GM12878 (cell line): ENCODE measurements at regions of chr7 and their contacts with region 1.

Region 1: GRCh38 chr7:23055582-23056178 is 41.8 kb upstream of the HYCC1 start:
- DNase-seq: peak; percentile 60
- ATAC-seq: peak; percentile 99
- H3K4me3 ChIP-seq: no peak overlapping the region
- H3K27ac ChIP-seq: no peak overlapping the region
- H3K4me1 ChIP-seq: no peaks in the 10 kb centered on the region
- H3K27me3 ChIP-seq: no peaks in the 10 kb centered on the region
- CTCF ChIP-seq: peak; percentile 86 to 95 (median 94)
- EP300 ChIP-seq: no peak
- POLR2A ChIP-seq: no peak
- RAD21 ChIP-seq: peak; percentile 99

Region 2: GRCh38 chr7:22726345-22727185 is 329.1 kb before region 1 on chr7:
- CTCF ChIA-PET with region 1: interaction called, 85 read pairs
- POLR2A ChIA-PET with region 1: no interaction called
- RAD21 ChIA-PET with region 1: interaction called, 7 read pairs
- SMC1A ChIA-PET with region 1: interaction called, 46 read pairs
- in situ Hi-C with region 1: no loop called
- intact Hi-C with region 1: loop called (anchors 2 kb)
- DNase-seq: no peak
- ATAC-seq: peak; percentile 92
- H3K4me3 ChIP-seq: no peak overlapping the region
- H3K27ac ChIP-seq: no peak overlapping the region
- H3K4me1 ChIP-seq: peaks cover 5% of the 10 kb centered on the region; the same call in 1 of the 2 replicates
- H3K27me3 ChIP-seq: peaks cover 5 to 8% of the 10 kb centered on the region in 2 experiments
- CTCF ChIP-seq: peak; percentile 67 to 84 (median 77)
- EP300 ChIP-seq: no peak
- POLR2A ChIP-seq: no peak
- RAD21 ChIP-seq: peak; percentile 70

Region 3: DNA sequence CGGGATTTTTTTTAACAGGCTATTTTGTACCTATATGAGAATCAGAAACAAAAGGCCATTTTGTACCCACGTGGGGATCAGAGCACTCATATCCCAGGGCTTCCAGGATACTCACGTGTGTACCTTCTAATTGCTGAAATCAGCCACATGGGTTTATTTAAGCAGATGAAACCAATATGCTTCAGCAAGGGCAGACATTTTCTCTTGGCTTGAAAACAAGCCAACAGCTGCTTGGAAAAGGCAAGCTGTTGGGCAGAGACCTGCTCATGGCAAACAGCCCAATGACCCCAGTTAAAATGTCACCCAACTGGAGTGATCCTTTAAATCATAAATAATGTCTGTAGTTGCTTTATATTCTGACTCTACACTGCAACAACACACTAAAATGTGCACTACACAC is 206.5 kb before region 1 on chr7:
- CTCF ChIA-PET with region 1: interaction called, 40 read pairs
- POLR2A ChIA-PET with region 1: interaction called, 3 read pairs
- RAD21 ChIA-PET with region 1: interaction called, 46 read pairs
- SMC1A ChIA-PET with region 1: interaction called, 4 read pairs
- in situ Hi-C with region 1: no loop called
- intact Hi-C with region 1: loop called (anchors 2 kb)
- DNase-seq: no peak
- ATAC-seq: no peak
- H3K4me3 ChIP-seq: no peak overlapping the region
- H3K27ac ChIP-seq: no peak overlapping the region
- H3K4me1 ChIP-seq: 0 out of 2 replicates have a peak, but pooled peaks cover 4% of the 10 kb centered on the region
- H3K27me3 ChIP-seq: no peaks in the 10 kb centered on the region
- CTCF ChIP-seq: no peak
- EP300 ChIP-seq: no peak
- POLR2A ChIP-seq: no peak
- RAD21 ChIP-seq: no peak

Region 4: GRCh38 chr7:22872096-22872807 is 183.4 kb before region 1 on chr7:
- CTCF ChIA-PET with region 1: interaction called, 6 read pairs
- POLR2A ChIA-PET with region 1: interaction called, 3 read pairs
- RAD21 ChIA-PET with region 1: interaction called, 7 read pairs
- SMC1A ChIA-PET with region 1: interaction called, 13 read pairs
- in situ Hi-C with region 1: no loop called
- intact Hi-C with region 1: no loop called
- DNase-seq: peak; percentile 69
- ATAC-seq: peak; percentile 99
- H3K4me3 ChIP-seq: 0 out of 2 replicates have a peak overlapping the region, but pooled peaks have one; percentile 18
- H3K27ac ChIP-seq: peak overlapping the region; percentile 62
- H3K4me1 ChIP-seq: peaks cover 7% of the 10 kb centered on the region
- H3K27me3 ChIP-seq: no peaks in the 10 kb centered on the region
- CTCF ChIP-seq: no peak
- EP300 ChIP-seq: no peak
- POLR2A ChIP-seq: no peak; the same call in 1 of the 2 replicates
- RAD21 ChIP-seq: no peak

Region 5: GRCh38 chr7:22949944-22950343 is 105.7 kb before region 1 on chr7:
- CTCF ChIA-PET with region 1: interaction called, 30 read pairs
- POLR2A ChIA-PET with region 1: no interaction called
- RAD21 ChIA-PET with region 1: interaction called, 7 read pairs
- SMC1A ChIA-PET with region 1: interaction called, 18 read pairs
- in situ Hi-C with region 1: no loop called
- intact Hi-C with region 1: loop called (anchors 10 kb)
- DNase-seq: no peak
- ATAC-seq: no peak
- H3K4me3 ChIP-seq: no peak overlapping the region
- H3K27ac ChIP-seq: no peak overlapping the region
- H3K4me1 ChIP-seq: no peaks in the 10 kb centered on the region
- H3K27me3 ChIP-seq: no peaks in the 10 kb centered on the region
- CTCF ChIP-seq: no peak
- EP300 ChIP-seq: no peak
- POLR2A ChIP-seq: no peak
- RAD21 ChIP-seq: no peak

Region 6: DNA sequence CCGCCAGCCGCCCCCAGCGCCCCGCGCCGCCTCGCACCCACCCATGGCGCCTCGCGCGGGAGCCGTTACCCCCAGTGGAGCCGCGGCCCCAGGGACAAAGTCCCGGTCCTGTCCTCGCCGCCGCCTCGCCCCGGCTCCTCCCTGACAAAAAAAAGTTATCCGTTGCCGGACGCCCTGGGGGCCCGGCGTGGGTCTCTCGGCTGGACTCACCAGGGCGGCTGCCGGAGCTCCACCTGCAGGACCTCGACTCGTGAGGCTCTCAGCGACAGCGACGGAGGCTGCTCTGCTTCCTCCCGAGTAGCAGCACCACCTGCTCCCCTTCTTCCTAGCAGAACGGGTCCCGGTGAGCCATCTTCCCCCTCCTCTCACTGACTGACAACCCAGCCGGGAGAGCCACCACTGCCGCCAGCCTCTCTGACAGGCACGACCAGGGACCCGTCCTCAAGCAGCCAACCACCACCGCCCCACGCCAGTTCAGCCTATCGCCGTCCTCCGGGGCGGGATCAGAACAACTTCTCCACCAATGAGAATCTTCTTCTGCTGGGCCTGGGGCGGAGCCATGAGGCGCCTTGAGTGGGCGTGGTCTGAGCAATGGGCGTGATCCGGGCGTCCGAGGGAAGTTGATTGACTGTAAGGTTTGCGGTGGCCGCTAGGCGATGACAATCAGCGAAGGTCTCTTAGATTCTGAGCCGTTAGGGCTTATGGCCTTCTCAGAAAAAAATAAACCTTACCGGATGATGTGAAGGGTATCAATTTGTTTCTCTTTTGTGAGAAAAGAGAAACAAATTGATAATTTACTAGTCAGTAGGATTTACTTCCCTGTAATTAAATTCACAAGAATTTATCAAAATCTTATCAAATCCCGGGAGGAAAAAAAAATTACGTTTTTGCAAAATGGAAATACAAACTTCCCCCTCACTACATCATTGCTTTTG is 41.7 kb before region 1 on chr7 and contains the start of gene HYCC1:
- CTCF ChIA-PET with region 1: interaction called, 23 read pairs
- POLR2A ChIA-PET with region 1: no interaction called
- RAD21 ChIA-PET with region 1: interaction called, 10 read pairs
- SMC1A ChIA-PET with region 1: interaction called, 27 read pairs
- in situ Hi-C with region 1: no loop called
- intact Hi-C with region 1: no loop called
- DNase-seq: peak; percentile 98
- ATAC-seq: peak; percentile 94
- H3K4me3 ChIP-seq: peak within 1 kb of the TSS; percentile 95
- H3K27ac ChIP-seq: peak within 1 kb of the TSS; percentile 74
- H3K4me1 ChIP-seq: peaks cover 20% of the 10 kb centered on the region
- H3K27me3 ChIP-seq: no peaks in the 10 kb centered on the region
- CTCF ChIP-seq: peak; percentile 62 to 64 (median 64)
- EP300 ChIP-seq: no peak
- POLR2A ChIP-seq: peak; percentile 99
- RAD21 ChIP-seq: peak; percentile 34; the same call in 1 of the 2 replicates
- polyA plus RNA-seq, gene HYCC1: 8.5 to 9.9 TPM

Region 7: GRCh38 chr7:23043441-23043840 is 12.2 kb before region 1 on chr7:
- CTCF ChIA-PET with region 1: interaction called, 32 read pairs
- POLR2A ChIA-PET with region 1: no interaction called
- RAD21 ChIA-PET with region 1: interaction called, 13 read pairs
- SMC1A ChIA-PET with region 1: interaction called, 32 read pairs
- in situ Hi-C with region 1: no loop called
- intact Hi-C with region 1: no loop called
- DNase-seq: no peak
- ATAC-seq: peak; percentile 63
- H3K4me3 ChIP-seq: no peak overlapping the region
- H3K27ac ChIP-seq: no peak overlapping the region
- H3K4me1 ChIP-seq: no peaks in the 10 kb centered on the region
- H3K27me3 ChIP-seq: no peaks in the 10 kb centered on the region
- CTCF ChIP-seq: no peak
- EP300 ChIP-seq: no peak
- POLR2A ChIP-seq: no peak
- RAD21 ChIP-seq: no peak

Region 8: GRCh38 chr7:23751852-23752251 is 696.2 kb after region 1 on chr7:
- CTCF ChIA-PET with region 1: no interaction called
- POLR2A ChIA-PET with region 1: no interaction called
- RAD21 ChIA-PET with region 1: no interaction called
- SMC1A ChIA-PET with region 1: no interaction called
- in situ Hi-C with region 1: no loop called
- intact Hi-C with region 1: no loop called
- DNase-seq: no peak
- ATAC-seq: no peak
- H3K4me3 ChIP-seq: no peak overlapping the region
- H3K27ac ChIP-seq: no peak overlapping the region
- H3K4me1 ChIP-seq: no peaks in the 10 kb centered on the region
- H3K27me3 ChIP-seq: no peaks in the 10 kb centered on the region
- CTCF ChIP-seq: no peak
- EP300 ChIP-seq: no peak
- POLR2A ChIP-seq: no peak
- RAD21 ChIP-seq: no peak